SK-N-SH (cell line): ENCODE measurements at regions of chr6 and their contacts with region 1.

Region 1: DNA sequence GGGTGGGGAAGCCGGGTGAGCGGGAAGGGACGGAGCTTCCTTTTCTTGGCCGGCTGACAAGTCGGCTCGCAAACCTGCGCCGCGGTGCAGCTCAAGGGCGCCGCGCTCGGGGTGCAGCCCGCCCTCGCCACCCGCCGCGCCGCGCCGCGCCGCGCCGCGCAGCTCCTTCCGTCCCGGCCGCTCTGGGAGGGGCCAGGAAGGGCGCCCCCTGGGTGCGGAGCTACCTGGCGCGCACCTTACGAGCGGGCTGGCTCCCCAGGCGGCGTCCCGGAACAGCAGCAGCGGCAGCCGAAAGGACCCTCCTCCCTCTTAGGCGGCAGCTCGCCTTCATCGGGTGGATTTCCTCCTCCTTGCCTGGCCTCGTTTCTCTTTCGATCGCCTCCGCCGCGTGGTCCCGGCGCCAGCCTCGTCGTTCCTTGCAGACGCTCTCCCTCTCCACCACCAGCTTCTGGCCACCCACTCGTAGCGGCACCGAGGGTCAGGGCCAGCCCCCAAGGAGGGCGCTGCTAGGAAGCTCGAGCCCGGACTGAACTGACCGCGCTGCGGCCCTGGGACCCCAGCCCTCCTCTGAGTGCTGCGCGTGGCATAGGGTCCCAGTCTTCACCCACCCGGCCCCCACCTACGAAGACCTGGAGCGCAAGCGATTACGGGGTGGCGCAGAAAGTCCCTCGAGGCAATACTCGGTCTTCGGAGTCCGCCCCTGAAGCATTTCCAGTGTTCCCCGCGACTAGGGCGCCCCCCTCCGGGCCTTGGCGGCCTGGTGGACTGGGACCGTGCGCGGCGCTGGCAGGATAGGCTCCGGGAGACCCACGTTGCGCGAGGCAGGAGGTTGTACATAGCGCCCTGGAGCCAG is at the start of gene MAP3K5:
- DNase-seq: peak; percentile 85
- H3K4me3 ChIP-seq: peak within 1 kb of the TSS; percentile 74 to 81
- H3K27ac ChIP-seq: peak within 1 kb of the TSS; percentile 70 to 92
- H3K4me1 ChIP-seq: peaks cover 2 to 6% of the 10 kb centered on the region in 2 experiments; a peak in 2 of 4 replicates
- H3K27me3 ChIP-seq: no peaks in the 10 kb centered on the region
- CTCF ChIP-seq: peak; percentile 75
- EP300 ChIP-seq: no peak
- RAD21 ChIP-seq: peak; percentile 87
- polyA plus RNA-seq, gene MAP3K5: 1.4 TPM in 2 replicates

Region 2: DNA sequence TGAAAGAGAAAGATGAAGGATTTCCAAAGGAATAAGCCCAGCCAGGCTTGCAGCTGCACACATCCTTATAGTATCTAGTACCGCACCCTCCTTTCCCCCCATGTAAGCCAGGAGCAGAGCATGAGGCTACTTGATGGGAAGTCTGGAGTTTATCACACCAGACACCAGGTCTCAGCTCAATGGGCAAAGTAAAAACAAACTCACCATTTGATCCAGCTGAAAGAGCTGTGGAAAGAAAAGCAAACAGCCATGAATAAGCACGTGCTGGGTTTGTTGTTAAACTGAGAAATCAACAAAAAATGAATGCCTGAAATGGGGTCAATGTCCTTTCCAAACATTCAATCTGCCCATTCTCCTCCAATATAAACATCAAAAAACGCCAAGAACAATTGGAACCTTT is 191.8 kb before region 1 on chr6:
- CTCF ChIA-PET with region 1: interaction called, 16 read pairs
- POLR2A ChIA-PET with region 1: no interaction called
- DNase-seq: no peak
- H3K4me3 ChIP-seq: no peak overlapping the region
- H3K27ac ChIP-seq: no peak overlapping the region
- H3K4me1 ChIP-seq: peaks cover 0 to 6% of the 10 kb centered on the region in 2 experiments; a peak in 1 of 4 replicates
- H3K27me3 ChIP-seq: no peaks in the 10 kb centered on the region
- CTCF ChIP-seq: no peak
- EP300 ChIP-seq: no peak
- RAD21 ChIP-seq: no peak

Region 3: DNA sequence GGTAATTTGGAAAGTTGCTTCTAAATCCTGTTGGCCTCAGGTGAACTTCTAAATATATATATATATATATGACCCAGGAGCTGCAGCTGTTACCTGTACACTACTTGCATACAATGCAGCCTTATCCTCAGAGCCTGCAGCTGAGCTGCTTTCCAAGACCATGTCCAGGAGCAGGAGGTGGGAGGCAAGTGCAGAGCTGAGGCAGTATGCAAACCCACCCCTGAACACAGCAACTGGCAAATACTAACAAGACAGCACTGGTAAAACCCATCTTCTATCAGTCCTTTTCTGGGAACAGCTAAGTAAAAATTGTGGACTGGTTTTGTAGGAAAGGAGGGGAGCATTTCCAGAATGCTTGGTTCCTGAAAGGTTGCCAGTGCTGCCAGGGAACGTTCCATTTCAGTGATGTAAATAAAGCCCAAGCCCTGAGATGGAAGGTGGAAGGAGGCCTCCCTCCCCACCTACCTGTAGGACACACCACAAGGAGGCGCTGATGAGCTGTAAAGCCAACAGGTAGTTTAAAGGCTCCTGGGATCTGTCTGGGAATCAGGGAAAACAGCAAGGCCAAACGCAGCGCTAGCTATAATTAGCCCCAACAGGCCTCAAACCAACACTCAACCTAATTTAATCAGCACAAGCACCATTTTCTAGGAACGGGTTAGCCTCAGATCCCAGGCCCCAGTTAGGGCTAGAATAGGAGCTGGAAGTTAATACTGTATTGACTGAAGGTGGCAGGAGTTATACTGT is 148.6 kb before region 1 on chr6:
- CTCF ChIA-PET with region 1: interaction called, 214 read pairs
- POLR2A ChIA-PET with region 1: interaction called, 40 read pairs
- DNase-seq: peak; percentile 73
- H3K4me3 ChIP-seq: no peak overlapping the region; a peak in 1 of 4 replicates
- H3K27ac ChIP-seq: peak overlapping the region; percentile 19 to 53; a peak in 2 of 4 replicates
- H3K4me1 ChIP-seq: peaks cover 4 to 9% of the 10 kb centered on the region in 2 experiments; a peak in 2 of 4 replicates
- H3K27me3 ChIP-seq: no peaks in the 10 kb centered on the region
- CTCF ChIP-seq: peak; percentile 83
- EP300 ChIP-seq: no peak
- RAD21 ChIP-seq: peak; percentile 92

Region 4: GRCh38 chr6:136685540-136686108 is 107.0 kb before region 1 on chr6:
- CTCF ChIA-PET with region 1: interaction called, 10 read pairs
- POLR2A ChIA-PET with region 1: no interaction called
- DNase-seq: no peak
- H3K4me3 ChIP-seq: no peak overlapping the region
- H3K27ac ChIP-seq: no peak overlapping the region
- H3K4me1 ChIP-seq: no peaks in the 10 kb centered on the region
- H3K27me3 ChIP-seq: no peaks in the 10 kb centered on the region
- CTCF ChIP-seq: no peak
- EP300 ChIP-seq: no peak
- RAD21 ChIP-seq: no peak

Region 5: GRCh38 chr6:136772685-136773472 is 19.8 kb before region 1 on chr6:
- CTCF ChIA-PET with region 1: interaction called, 18 read pairs
- POLR2A ChIA-PET with region 1: interaction called, 3 read pairs
- DNase-seq: no peak
- H3K4me3 ChIP-seq: no peak overlapping the region
- H3K27ac ChIP-seq: no peak overlapping the region
- H3K4me1 ChIP-seq: peaks cover 0 to 13% of the 10 kb centered on the region in 2 experiments
- H3K27me3 ChIP-seq: no peaks in the 10 kb centered on the region
- CTCF ChIP-seq: no peak
- EP300 ChIP-seq: no peak
- RAD21 ChIP-seq: no peak

Region 6: GRCh38 chr6:137313928-137314855 is 521.6 kb after region 1 on chr6:
- CTCF ChIA-PET with region 1: interaction called, 10 read pairs
- POLR2A ChIA-PET with region 1: no interaction called
- DNase-seq: peak; percentile 64
- H3K4me3 ChIP-seq: peak overlapping the region in 1 of 2 experiments; percentile 20; a peak in 1 of 4 replicates
- H3K27ac ChIP-seq: no peak overlapping the region
- H3K4me1 ChIP-seq: peaks cover 0 to 5% of the 10 kb centered on the region in 2 experiments; a peak in 2 of 4 replicates
- H3K27me3 ChIP-seq: no peaks in the 10 kb centered on the region
- CTCF ChIP-seq: peak; percentile 88
- EP300 ChIP-seq: no peak
- RAD21 ChIP-seq: peak; percentile 82